MCF 10A (cell line): ENCODE measurements at regions of chr1 and their contacts with region 1.

Region 1: GRCh38 chr1:178684542-178685000 is 40.5 kb upstream of the RALGPS2 start:
- DNase-seq: peak; percentile 89
- H3K4me3 Mint-ChIP-seq: no peak overlapping the region
- H3K27ac Mint-ChIP-seq: peak overlapping the region; percentile 73
- H3K4me1 Mint-ChIP-seq: peaks cover 42% of the 10 kb centered on the region
- H3K27me3 Mint-ChIP-seq: no peaks in the 10 kb centered on the region
- CTCF ChIP-seq: no peak

Region 2: DNA sequence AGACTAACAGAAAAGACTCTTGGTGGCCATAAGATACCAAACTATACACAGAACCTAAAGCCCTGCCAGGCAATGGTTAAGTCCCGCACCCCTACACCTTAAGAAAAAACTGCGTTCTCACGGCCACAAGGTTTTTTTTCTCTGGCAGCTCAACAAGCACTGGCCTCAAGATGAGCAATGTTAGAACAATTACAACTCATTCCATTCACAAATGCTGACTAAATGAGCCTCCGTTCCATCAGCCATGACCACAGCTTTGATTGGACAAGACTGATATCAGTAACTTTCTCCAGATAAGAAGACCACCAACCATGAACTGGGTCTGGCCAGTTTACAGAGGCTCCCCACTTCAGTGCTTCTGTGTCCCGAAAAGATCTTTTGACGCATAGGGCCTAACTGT is 746.6 kb before region 1 on chr1:
- CTCF ChIA-PET with region 1: no interaction called
- POLR2A ChIA-PET with region 1: no interaction called
- intact Hi-C with region 1: no loop called
- DNase-seq: no peak
- H3K4me3 Mint-ChIP-seq: no peak overlapping the region
- H3K27ac Mint-ChIP-seq: no peak overlapping the region
- H3K4me1 Mint-ChIP-seq: peaks cover 5% of the 10 kb centered on the region
- H3K27me3 Mint-ChIP-seq: no peaks in the 10 kb centered on the region
- CTCF ChIP-seq: no peak

Region 3: DNA sequence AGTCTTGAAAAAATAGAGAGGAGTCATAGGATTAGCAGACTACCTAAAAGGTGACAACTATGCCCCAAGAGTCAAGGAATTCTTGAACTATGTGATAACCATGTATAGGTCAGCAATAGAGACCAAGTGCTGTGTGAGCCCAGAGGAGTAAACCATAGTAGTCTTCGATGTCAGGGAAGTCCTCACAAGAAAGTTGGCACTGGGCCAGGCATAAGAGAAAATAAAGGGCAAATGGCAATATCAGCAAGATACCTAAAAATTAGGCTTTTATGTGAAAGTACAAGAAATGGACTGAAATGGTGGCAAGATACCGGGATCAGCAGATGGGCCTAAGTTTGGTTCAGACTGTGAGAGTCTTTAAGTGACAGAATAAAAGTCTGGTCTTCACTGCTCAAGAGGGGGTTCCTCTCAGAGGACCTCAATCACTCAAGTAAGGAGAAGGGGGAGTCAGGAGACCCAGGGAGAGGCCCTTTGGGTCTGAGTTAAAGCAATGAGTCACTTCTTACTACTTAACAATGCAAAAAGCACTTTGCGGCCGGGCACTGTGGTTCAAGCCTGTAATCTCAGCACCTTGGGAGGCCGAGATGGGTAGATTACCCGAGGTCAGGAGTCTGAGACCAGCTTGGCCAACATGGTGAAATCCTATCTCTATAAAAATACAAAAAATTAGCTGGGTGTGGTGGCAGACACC is 76.7 kb before region 1 on chr1:
- CTCF ChIA-PET with region 1: interaction called, 5 read pairs
- POLR2A ChIA-PET with region 1: interaction called, 3 read pairs
- intact Hi-C with region 1: loop called (anchors 1 kb)
- DNase-seq: no peak
- H3K4me3 Mint-ChIP-seq: no peak overlapping the region
- H3K27ac Mint-ChIP-seq: peak overlapping the region; percentile 88
- H3K4me1 Mint-ChIP-seq: peaks cover 30% of the 10 kb centered on the region
- H3K27me3 Mint-ChIP-seq: no peaks in the 10 kb centered on the region
- CTCF ChIP-seq: no peak

Region 4: DNA sequence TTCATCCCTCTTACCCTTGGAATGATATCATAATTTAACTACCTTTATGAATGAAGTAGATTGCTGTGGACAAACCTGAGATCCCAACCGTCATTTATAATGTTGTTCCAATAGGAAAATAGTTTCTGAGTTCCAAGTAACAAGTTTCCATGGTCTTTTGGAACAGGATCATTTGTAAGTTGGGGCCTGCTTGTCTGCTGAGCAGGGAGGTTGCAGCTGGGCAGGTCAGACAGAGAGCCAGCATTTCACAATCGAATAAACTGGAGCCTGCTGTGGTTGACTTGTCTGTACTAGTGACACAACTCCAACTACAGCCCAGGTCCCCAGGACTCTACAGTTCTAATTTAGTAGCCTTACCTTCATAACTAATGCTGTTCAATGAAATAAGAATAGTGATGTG is 21.9 kb after region 1 on chr1:
- CTCF ChIA-PET with region 1: interaction called, 10 read pairs
- POLR2A ChIA-PET with region 1: interaction called, 9 read pairs
- intact Hi-C with region 1: no loop called
- DNase-seq: peak; percentile 70
- H3K4me3 Mint-ChIP-seq: no peak overlapping the region
- H3K27ac Mint-ChIP-seq: no peak overlapping the region
- H3K4me1 Mint-ChIP-seq: peaks cover 25% of the 10 kb centered on the region
- H3K27me3 Mint-ChIP-seq: no peaks in the 10 kb centered on the region
- CTCF ChIP-seq: no peak

Region 5: DNA sequence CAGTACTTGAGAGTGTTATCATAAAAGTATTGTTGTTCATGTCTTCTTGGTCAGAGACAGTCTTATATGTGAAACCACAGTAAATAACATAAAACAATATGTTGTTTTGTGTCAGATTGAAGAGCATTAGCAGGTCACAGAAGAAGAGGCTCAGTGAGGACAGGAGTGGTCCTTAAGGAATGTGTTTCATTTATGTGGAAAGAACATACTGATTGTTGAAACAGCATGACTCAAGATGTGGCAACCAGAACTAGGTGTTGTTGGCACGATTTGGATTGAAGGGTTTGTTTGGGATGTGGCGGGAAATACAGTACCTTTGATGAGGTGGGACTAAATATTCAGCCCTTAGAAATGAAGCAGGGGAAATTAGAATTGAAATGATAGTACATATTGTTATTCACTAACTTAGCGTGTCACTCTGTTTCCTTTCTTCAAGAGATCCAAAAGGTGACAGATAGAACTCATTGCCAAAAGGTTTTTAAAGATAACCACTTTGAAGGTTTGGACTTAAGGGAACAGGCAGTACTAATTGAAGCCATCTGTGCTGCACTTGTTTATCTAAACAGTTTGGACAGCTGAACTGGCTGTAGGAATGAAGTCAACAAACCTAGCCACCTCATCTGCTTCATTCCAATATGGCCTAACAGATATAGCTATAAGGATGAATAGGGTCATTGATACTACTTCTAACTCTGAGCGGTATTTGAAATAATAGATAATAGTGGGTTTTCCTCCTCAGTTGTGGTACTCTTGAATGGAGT is 54.9 kb after region 1 on chr1:
- CTCF ChIA-PET with region 1: no interaction called
- POLR2A ChIA-PET with region 1: no interaction called
- intact Hi-C with region 1: no loop called
- DNase-seq: peak; percentile 67
- H3K4me3 Mint-ChIP-seq: no peak overlapping the region
- H3K27ac Mint-ChIP-seq: peak overlapping the region; percentile 32
- H3K4me1 Mint-ChIP-seq: peaks cover 11% of the 10 kb centered on the region
- H3K27me3 Mint-ChIP-seq: no peaks in the 10 kb centered on the region
- CTCF ChIP-seq: no peak